Esophagus squamous epithelium (tissue), 5 donors: ENCODE measurements at regions of chr13 and their contacts with region 1.

Region 1: DNA sequence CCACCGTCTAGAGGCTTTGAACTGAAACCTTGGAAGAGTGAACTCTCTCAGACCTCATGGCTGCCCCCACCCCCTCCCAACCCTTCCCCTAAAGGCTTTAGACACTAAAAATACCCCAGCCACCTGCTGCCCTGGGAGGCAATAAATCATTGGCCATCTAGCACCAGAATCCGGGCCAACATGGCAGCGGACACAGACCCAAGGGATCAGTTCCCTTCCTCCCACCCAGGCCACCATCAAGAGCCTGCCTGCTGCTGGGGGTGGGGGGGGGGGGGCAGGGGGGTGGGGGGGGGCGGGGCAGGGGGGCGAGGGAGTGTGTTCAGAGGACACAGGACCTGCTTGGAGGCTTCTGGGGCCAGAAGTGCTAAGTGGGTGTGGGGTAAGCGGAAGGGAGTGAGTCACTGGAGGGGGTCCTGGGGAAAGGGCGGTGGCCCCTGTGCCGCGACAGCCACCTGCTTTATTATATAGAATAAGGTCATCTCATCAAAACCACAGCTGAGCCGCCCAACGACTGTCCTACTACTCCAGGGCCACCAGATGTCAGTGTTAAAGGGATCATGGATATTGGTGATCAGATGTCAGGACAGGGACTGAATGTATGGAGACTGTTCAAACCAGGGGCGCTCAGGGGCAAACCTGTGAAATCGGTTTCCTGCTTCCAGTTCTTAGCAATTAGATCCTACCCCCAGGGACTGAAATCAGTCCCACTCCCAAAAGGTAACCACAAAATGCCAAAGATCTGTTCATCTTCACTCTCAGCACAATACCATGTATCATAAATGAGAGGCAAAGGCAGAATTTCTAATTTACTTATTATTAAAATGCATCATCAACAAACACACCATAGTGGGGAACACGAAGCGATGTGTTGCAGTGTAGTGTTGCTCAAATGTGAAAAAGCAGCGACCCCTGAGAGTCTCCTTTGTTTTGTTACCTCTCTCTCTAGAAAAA is 24.3 kb downstream of the ARL11 start:
- DNase-seq: no peak
- H3K4me3 ChIP-seq: no peak overlapping the region
- H3K27ac ChIP-seq: no peak overlapping the region
- H3K4me1 ChIP-seq: peaks cover 6 to 33% (median 9%) of the 10 kb centered on the region in 3 donors
- H3K27me3 ChIP-seq: no peaks in the 10 kb centered on the region
- CTCF ChIP-seq: peak in 5 of 6 experiments; percentile 20 to 59 (median 41)
- POLR2A ChIP-seq: no peak

Region 2: DNA sequence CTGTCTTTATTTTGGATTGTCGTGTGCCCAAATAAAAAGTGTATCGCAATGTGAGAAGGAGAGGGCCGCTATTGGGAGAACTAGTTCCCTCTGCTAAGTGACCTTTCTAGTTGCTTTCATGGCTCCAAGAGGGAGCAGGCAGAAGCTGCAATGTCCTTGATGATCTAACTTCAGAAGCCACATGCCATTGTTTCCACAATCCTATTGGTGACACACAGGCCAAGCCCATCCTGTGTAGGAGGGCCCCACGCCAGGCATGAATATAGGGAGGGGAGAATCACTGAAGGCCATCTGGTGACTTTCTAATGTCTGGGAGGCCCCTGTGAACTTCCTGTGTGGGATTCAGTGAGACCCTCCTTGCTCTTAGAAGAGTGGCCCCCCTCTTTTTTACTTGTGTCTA is 187.6 kb after region 1 on chr13:
- intact Hi-C with region 1: loop called (anchors 10 kb)
- DNase-seq: no peak
- H3K4me3 ChIP-seq: no peak overlapping the region
- H3K27ac ChIP-seq: peak overlapping the region in 1 of 4 donors; percentile 7
- H3K4me1 ChIP-seq: peaks cover 6 to 24% (median 9%) of the 10 kb centered on the region in 3 donors
- H3K27me3 ChIP-seq: no peaks in the 10 kb centered on the region
- CTCF ChIP-seq: no peak
- POLR2A ChIP-seq: no peak